ENCODE measurements at regions of chr14 and their contacts with region 1.

Region 1: GRCh38 chr14:75711104-75711795 is 50.2 kb downstream of the TTLL5 start:
- DNase-seq: peak in 3 of 5 donors; percentile 14 to 60 (median 17)
- H3K4me3 ChIP-seq: no peak overlapping the region
- H3K27ac ChIP-seq: peak overlapping the region in 1 of 2 donors; percentile 20
- H3K4me1 ChIP-seq: no peaks in the 10 kb centered on the region
- H3K27me3 ChIP-seq: no peaks in the 10 kb centered on the region
- CTCF ChIP-seq: peak; percentile 44

Region 2: GRCh38 chr14:74493343-74494261 is 1217.6 kb before region 1 on chr14 and contains the start of gene ISCA2:
- intact Hi-C with region 1: no loop called
- DNase-seq: peak; percentile 100
- H3K4me3 ChIP-seq: peak within 1 kb of the TSS; percentile 94 to 96 (median 94)
- H3K27ac ChIP-seq: peak within 1 kb of the TSS; percentile 96 to 97
- H3K4me1 ChIP-seq: peaks cover 2 to 11% (median 6%) of the 10 kb centered on the region in 3 donors
- H3K27me3 ChIP-seq: no peaks in the 10 kb centered on the region
- CTCF ChIP-seq: no peak
- total RNA-seq, gene ISCA2: 27.1 TPM

Region 3: DNA sequence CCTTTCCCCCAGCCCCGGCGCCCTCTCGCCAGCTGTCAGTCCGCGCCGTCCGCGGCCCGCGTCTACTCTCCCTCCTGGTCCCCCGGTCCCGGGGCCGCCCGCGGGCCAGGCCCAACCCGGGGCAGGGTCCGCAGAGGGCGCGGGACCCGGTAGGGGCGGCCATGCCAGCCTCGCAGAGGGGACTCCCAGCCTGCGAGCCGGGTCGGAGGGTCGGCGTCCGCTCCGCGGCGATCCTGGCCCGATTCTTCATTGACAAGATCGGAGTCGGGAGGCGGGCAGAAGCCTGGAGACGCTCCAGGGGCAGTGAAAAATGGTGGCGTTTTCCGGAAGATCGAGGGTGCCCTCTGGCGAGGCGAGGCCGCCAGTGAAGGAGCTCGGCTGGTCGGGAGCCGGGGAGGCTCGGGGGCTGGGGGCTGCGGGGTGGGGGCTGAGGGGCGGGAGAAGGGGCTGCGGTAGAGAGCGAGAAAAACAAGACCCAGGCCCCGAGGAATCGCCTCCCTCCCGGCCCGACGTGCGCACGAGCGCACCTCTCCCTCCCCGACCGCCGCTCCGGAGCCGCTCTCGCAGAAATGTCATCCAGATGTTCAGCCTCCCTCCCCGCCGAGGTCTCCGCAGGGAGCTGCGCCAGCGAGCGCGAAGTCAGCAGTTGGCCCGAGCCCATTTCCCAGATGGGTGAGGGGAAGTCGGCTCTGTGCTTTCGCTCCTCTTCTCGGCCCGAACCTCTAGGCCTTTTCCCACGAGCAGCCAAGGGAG is 271.2 kb after region 1 on chr14:
- intact Hi-C with region 1: loop called (anchors 5 kb)
- DNase-seq: peak; percentile 88 to 95 (median 90)
- H3K4me3 ChIP-seq: peak overlapping the region; percentile 66 to 85 (median 75)
- H3K27ac ChIP-seq: peak overlapping the region; percentile 89 to 92
- H3K4me1 ChIP-seq: peaks cover 3 to 11% (median 5%) of the 10 kb centered on the region in 3 donors
- H3K27me3 ChIP-seq: no peaks in the 10 kb centered on the region
- CTCF ChIP-seq: peak; percentile 77

Measured in kidney (tissue), 22 donors.